Panc1 (cell line): ENCODE measurements at regions of chr3 and their contacts with region 1.

Region 1: GRCh38 chr3:140863580-140864009 is 78.0 kb upstream of the SLC25A36 start:
- DNase-seq: peak; percentile 39
- ATAC-seq: peak; percentile 90
- H3K4me3 ChIP-seq: no peak overlapping the region
- H3K27ac ChIP-seq: no peak overlapping the region
- H3K4me1 ChIP-seq: no peaks in the 10 kb centered on the region
- H3K27me3 ChIP-seq: no peaks in the 10 kb centered on the region
- CTCF ChIP-seq: peak; percentile 75

Region 2: DNA sequence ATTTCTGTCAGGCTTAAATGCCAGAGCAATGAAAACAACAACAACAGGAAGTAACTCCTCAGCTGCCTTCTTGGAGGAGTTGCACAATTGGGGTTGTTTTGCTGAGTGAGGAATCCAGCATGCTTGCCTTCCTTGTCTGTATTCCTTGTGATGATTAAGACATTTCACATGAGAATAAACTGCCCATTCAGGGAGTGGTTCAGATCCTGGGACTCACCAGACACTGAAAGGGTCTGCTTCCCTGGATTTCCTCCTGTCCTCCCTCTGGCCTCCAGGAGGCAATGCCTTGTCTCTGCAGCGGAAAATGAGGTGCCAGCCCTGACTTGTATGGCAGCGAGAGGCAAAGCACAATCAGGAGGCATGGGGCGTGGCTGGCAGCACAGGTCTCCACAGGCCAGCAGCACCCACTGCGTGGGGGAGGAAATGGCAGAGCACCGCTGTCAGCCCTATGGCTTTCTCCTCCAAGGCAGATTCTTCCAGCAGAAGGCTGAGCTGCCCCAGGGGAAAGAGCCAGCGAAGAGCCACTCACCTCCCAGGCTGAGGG is 1428.8 kb before region 1 on chr3:
- CTCF ChIA-PET with region 1: no interaction called
- POLR2A ChIA-PET with region 1: no interaction called
- in situ Hi-C with region 1: no loop called
- intact Hi-C with region 1: loop called (anchors 10 kb)
- DNase-seq: no peak
- ATAC-seq: peak; percentile 48
- H3K4me3 ChIP-seq: no peak overlapping the region
- H3K27ac ChIP-seq: no peak overlapping the region
- H3K4me1 ChIP-seq: no peaks in the 10 kb centered on the region
- H3K27me3 ChIP-seq: no peaks in the 10 kb centered on the region
- CTCF ChIP-seq: no peak

Region 3: GRCh38 chr3:139935016-139935865 is 928.4 kb before region 1 on chr3 and contains the start of gene CLSTN2:
- CTCF ChIA-PET with region 1: no interaction called
- POLR2A ChIA-PET with region 1: no interaction called
- in situ Hi-C with region 1: no loop called
- intact Hi-C with region 1: loop called (anchors 2 kb)
- DNase-seq: no peak
- ATAC-seq: peak; percentile 80
- H3K4me3 ChIP-seq: peak within 1 kb of the TSS; percentile 19 to 29
- H3K27ac ChIP-seq: no peak within 1 kb of the TSS
- H3K4me1 ChIP-seq: peaks cover 6% of the 10 kb centered on the region; the same call in 1 of the 2 replicates
- H3K27me3 ChIP-seq: peaks cover 26% of the 10 kb centered on the region
- CTCF ChIP-seq: no peak
- total RNA-seq, gene CLSTN2: 0.03 TPM